ENCODE measurements at regions of chr17 and their contacts with region 1.

Region 1: GRCh38 chr17:27654654-27655524 is 23.9 kb downstream of the LGALS9 start:
- DNase-seq: peak; percentile 91
- ATAC-seq: peak; percentile 92
- H3K4me3 Mint-ChIP-seq: no peak overlapping the region
- H3K27ac Mint-ChIP-seq: no peak overlapping the region
- H3K4me1 Mint-ChIP-seq: peaks cover 13% of the 10 kb centered on the region
- H3K27me3 Mint-ChIP-seq: no peaks in the 10 kb centered on the region; the same call in 1 of the 2 replicates
- CTCF ChIP-seq: peak; percentile 100

Region 2: GRCh38 chr17:27381007-27381501 is 273.8 kb before region 1 on chr17:
- CTCF ChIA-PET with region 1: interaction called, 10 read pairs
- POLR2A ChIA-PET with region 1: no interaction called
- DNase-seq: peak; percentile 92
- ATAC-seq: peak; percentile 92
- H3K4me3 Mint-ChIP-seq: no peak overlapping the region
- H3K27ac Mint-ChIP-seq: no peak overlapping the region
- H3K4me1 Mint-ChIP-seq: no peaks in the 10 kb centered on the region
- H3K27me3 Mint-ChIP-seq: no peaks in the 10 kb centered on the region
- CTCF ChIP-seq: peak; percentile 100

Region 3: GRCh38 chr17:27559506-27560481 is 95.1 kb before region 1 on chr17:
- CTCF ChIA-PET with region 1: no interaction called
- POLR2A ChIA-PET with region 1: no interaction called
- DNase-seq: no peak
- ATAC-seq: peak; percentile 48
- H3K4me3 Mint-ChIP-seq: no peak overlapping the region
- H3K27ac Mint-ChIP-seq: peak overlapping the region; percentile 82
- H3K4me1 Mint-ChIP-seq: peaks cover 15% of the 10 kb centered on the region
- H3K27me3 Mint-ChIP-seq: no peaks in the 10 kb centered on the region
- CTCF ChIP-seq: no peak

Region 4: DNA sequence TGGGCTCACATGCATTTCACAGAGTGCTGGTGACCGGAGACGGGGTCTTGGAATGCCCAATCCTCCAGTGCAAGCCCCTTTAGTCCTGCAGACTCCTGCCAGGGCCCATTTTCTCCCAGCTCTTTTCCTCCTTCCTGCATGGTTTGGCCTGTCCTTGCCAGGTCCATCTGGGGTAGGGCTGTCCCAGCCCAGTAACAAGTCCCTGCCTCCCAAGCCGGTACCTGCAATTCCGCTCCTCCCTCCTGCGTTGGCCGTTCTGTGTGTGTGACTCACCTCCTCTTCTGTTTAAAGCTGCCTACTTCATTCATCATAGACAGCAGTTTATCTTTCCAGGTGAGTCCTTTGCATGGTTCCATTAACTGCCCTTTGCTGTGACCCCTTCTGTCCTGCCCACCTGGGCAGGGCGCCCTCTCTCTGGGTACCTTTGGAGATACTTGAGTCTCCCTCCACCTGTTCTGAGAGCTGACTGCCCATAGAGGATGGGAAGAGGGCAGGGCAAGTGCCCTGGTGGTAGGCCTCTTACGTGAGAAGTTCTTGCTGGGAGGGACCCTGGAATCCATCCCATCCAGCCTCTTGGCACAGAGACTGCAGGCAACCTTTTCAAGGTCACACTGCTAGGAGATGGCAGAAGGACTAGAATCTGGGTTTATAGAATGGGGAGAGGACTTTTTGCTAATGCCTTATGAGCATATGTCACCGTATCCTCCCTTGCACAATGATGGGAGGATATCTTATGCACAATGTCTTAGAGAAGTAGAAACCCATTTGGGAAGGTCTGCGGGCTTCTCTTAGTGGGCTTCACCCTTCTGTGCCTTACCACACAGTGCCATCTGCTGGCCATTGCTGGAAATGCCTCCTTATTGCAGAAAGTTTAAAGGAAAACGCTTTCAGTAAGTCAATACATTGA is 53.6 kb before region 1 on chr17:
- CTCF ChIA-PET with region 1: interaction called, 67 read pairs
- POLR2A ChIA-PET with region 1: no interaction called
- DNase-seq: peak; percentile 90
- ATAC-seq: peak; percentile 19; the same call in 1 of the 2 replicates
- H3K4me3 Mint-ChIP-seq: no peak overlapping the region
- H3K27ac Mint-ChIP-seq: no peak overlapping the region; the same call in 1 of the 2 replicates
- H3K4me1 Mint-ChIP-seq: peaks cover 7% of the 10 kb centered on the region
- H3K27me3 Mint-ChIP-seq: no peaks in the 10 kb centered on the region
- CTCF ChIP-seq: peak; percentile 83

Region 5: GRCh38 chr17:27633312-27634025 is 21.4 kb before region 1 on chr17:
- CTCF ChIA-PET with region 1: interaction called, 10 read pairs
- POLR2A ChIA-PET with region 1: no interaction called
- DNase-seq: no peak
- ATAC-seq: no peak
- H3K4me3 Mint-ChIP-seq: no peak overlapping the region
- H3K27ac Mint-ChIP-seq: no peak overlapping the region
- H3K4me1 Mint-ChIP-seq: 0 out of 2 replicates have a peak, but pooled peaks cover 3% of the 10 kb centered on the region
- H3K27me3 Mint-ChIP-seq: no peaks in the 10 kb centered on the region
- CTCF ChIP-seq: no peak

Region 6: GRCh38 chr17:27741361-27741861 is 86.5 kb after region 1 on chr17:
- CTCF ChIA-PET with region 1: interaction called, 11 read pairs
- POLR2A ChIA-PET with region 1: no interaction called
- DNase-seq: no peak
- ATAC-seq: no peak
- H3K4me3 Mint-ChIP-seq: no peak overlapping the region
- H3K27ac Mint-ChIP-seq: no peak overlapping the region
- H3K4me1 Mint-ChIP-seq: no peaks in the 10 kb centered on the region
- H3K27me3 Mint-ChIP-seq: no peaks in the 10 kb centered on the region
- CTCF ChIP-seq: no peak

Region 7: GRCh38 chr17:27760069-27760885 is 105.4 kb after region 1 on chr17:
- CTCF ChIA-PET with region 1: interaction called, 80 read pairs
- POLR2A ChIA-PET with region 1: no interaction called
- DNase-seq: peak; percentile 87
- ATAC-seq: peak; percentile 85
- H3K4me3 Mint-ChIP-seq: no peak overlapping the region
- H3K27ac Mint-ChIP-seq: no peak overlapping the region
- H3K4me1 Mint-ChIP-seq: no peaks in the 10 kb centered on the region
- H3K27me3 Mint-ChIP-seq: no peaks in the 10 kb centered on the region
- CTCF ChIP-seq: peak; percentile 99

Region 8: GRCh38 chr17:27818401-27819105 is 163.7 kb after region 1 on chr17:
- CTCF ChIA-PET with region 1: no interaction called
- POLR2A ChIA-PET with region 1: no interaction called
- DNase-seq: no peak
- ATAC-seq: no peak
- H3K4me3 Mint-ChIP-seq: no peak overlapping the region
- H3K27ac Mint-ChIP-seq: no peak overlapping the region
- H3K4me1 Mint-ChIP-seq: peaks cover 5% of the 10 kb centered on the region
- H3K27me3 Mint-ChIP-seq: peaks cover 3% of the 10 kb centered on the region
- CTCF ChIP-seq: no peak

Region 9: DNA sequence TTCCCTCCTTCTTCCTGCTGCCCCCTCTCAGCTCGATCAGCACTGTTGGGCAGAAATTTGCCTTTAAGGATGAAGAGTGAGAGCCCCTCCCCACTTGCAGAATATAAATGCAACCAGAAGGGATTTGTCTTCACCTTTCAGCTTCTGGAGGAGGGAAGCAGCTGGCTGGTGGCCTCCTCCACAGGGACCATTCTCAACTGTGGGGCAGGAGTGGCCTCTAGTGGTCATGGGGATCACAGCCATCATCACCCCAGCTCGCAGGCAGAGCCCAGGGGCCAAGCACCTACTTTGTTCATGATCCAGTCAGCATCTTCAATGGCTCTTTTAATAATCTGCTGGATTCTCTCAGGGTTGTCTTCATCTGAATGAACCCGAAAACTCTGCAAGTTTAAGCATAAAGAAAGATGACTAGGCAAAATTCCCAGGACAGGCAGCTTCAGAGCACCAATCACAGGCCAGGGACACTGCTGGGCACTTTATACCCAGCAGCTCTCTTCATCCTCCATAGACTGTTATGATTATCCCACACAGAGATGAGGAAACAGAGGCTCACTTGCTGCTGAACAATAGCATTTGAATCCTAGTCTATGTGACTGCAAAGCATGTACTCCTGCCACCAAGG is 225.2 kb after region 1 on chr17:
- CTCF ChIA-PET with region 1: interaction called, 55 read pairs
- POLR2A ChIA-PET with region 1: no interaction called
- DNase-seq: peak; percentile 84
- ATAC-seq: peak; percentile 95
- H3K4me3 Mint-ChIP-seq: no peak overlapping the region
- H3K27ac Mint-ChIP-seq: no peak overlapping the region
- H3K4me1 Mint-ChIP-seq: peaks cover 19% of the 10 kb centered on the region
- H3K27me3 Mint-ChIP-seq: no peaks in the 10 kb centered on the region
- CTCF ChIP-seq: peak; percentile 73; the same call in 1 of the 2 replicates

Region 10: DNA sequence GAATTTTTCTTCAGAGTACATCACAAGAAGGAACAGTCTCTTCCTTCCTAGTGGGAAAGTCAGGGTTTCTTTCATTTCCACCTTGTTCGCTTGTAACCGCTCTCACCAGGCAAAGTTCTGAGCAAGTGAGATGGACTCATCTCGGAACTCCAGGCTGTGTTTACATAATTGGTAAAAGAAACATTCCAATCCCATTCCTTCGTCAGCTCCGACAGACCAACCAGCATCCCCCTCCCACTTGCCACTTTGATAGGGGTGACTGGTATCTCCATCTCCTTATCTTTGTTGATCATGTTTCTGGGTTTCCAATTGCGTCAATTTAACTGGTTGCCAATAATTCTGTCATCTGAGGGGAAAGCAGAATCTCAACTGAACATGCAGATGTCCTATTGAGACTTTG is 275.1 kb after region 1 on chr17:
- CTCF ChIA-PET with region 1: no interaction called
- POLR2A ChIA-PET with region 1: no interaction called
- DNase-seq: no peak
- ATAC-seq: no peak
- H3K4me3 Mint-ChIP-seq: no peak overlapping the region
- H3K27ac Mint-ChIP-seq: no peak overlapping the region
- H3K4me1 Mint-ChIP-seq: peaks cover 6% of the 10 kb centered on the region
- H3K27me3 Mint-ChIP-seq: peaks cover 27% of the 10 kb centered on the region
- CTCF ChIP-seq: no peak

Measured in WTC11 (cell line).